ENCODE measurements at regions of chr7 and their contacts with region 1.

Region 1: DNA sequence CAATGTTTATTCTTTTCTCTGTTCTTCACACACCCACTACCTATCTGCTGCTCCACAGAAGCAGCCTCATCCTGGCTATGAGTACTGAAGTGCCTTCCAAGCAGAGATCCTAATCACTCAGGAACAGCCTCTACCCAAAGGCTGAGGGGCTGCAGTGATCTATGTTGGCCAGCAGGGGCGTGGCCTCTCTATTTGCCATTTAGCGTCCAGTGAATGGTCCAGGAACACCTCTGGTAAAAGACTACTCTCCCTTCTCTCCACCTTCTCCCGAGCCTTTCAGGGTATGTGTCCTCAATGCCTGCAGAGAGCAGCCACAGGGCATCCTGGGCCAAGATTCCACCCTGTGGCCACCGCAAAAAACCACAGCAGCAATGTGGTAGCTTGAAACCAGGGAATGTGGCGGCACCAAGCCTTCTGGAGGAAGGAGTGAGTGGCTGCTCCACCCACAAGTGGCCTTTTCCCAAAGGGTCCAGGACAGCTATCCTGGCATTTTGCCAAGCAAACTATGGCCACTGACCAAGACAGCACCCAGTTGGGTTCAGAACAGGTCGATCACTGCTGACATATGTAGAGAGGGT is 70.9 kb downstream of the SYPL1 start:
- DNase-seq: no peak
- H3K4me3 ChIP-seq: no peak overlapping the region
- CTCF ChIP-seq: no peak
- POLR2A ChIP-seq: no peak

Region 2: GRCh38 chr7:105652359-105652993 is 388.8 kb before region 1 on chr7:
- intact Hi-C with region 1: loop called (anchors 5 kb)
- DNase-seq: peak; percentile 62 to 95
- H3K4me3 ChIP-seq: no peak overlapping the region
- CTCF ChIP-seq: peak in 1 of 3 donors; percentile 53
- POLR2A ChIP-seq: no peak

Region 3: DNA sequence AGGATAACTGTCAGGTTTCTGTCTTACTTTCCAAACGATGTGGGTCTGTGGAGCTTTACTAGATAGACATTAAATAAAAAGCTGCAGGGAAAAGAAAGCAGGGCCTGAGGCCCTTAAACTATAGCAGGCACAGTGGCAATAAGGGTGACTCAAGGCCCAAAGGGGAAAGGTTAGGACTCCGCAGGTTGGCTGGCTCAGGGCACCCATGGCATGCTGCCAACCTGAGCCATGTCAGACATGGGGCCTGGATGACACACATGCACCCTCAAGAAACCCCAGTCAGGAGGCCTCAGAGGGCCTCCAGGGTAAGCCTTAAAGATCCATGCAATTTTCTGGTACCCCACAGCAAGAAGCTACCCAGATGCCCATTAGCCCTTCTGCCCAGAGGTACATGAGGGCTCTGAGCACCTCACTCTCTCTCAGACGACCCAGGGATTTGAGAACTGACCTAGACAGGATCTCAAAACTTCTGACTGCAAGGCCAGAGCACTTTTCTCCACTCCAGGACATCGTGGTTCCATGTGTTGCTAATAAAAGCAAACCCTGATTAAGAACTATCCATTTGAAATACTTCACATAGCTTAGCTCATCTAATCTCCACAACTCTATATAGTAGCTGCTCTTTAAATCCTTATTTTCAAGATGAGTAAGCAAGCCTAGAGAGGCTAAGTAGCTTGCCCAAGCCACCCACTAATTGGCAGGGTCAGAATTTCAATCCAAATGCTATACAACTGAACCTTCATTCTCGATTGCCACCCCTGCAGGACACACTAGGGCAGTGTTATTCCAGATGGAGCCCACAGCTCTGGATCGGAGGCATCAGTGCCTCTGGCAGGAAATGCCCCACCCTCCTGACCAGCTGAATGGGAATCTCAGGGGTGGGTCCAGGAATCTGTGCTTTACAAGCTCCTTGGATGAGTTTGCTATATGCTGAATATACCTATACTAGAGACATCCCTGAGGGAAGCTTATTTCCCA is 327.5 kb before region 1 on chr7:
- intact Hi-C with region 1: no loop called
- DNase-seq: no peak
- H3K4me3 ChIP-seq: no peak overlapping the region
- CTCF ChIP-seq: no peak
- POLR2A ChIP-seq: no peak

Region 4: GRCh38 chr7:105759670-105760550 is 281.3 kb before region 1 on chr7:
- intact Hi-C with region 1: loop called (anchors 5 kb)
- DNase-seq: peak in 1 of 2 donors; percentile 26
- H3K4me3 ChIP-seq: no peak overlapping the region
- CTCF ChIP-seq: peak in 1 of 3 donors; percentile 22
- POLR2A ChIP-seq: no peak

Region 5: GRCh38 chr7:105830391-105831301 is 210.6 kb before region 1 on chr7:
- intact Hi-C with region 1: no loop called
- DNase-seq: no peak
- H3K4me3 ChIP-seq: no peak overlapping the region
- CTCF ChIP-seq: no peak
- POLR2A ChIP-seq: no peak

Measured in lower leg skin (tissue), 4 donors.